MCF 10A (cell line): ENCODE measurements at regions of chr11 and their contacts with region 1.

Region 1: DNA sequence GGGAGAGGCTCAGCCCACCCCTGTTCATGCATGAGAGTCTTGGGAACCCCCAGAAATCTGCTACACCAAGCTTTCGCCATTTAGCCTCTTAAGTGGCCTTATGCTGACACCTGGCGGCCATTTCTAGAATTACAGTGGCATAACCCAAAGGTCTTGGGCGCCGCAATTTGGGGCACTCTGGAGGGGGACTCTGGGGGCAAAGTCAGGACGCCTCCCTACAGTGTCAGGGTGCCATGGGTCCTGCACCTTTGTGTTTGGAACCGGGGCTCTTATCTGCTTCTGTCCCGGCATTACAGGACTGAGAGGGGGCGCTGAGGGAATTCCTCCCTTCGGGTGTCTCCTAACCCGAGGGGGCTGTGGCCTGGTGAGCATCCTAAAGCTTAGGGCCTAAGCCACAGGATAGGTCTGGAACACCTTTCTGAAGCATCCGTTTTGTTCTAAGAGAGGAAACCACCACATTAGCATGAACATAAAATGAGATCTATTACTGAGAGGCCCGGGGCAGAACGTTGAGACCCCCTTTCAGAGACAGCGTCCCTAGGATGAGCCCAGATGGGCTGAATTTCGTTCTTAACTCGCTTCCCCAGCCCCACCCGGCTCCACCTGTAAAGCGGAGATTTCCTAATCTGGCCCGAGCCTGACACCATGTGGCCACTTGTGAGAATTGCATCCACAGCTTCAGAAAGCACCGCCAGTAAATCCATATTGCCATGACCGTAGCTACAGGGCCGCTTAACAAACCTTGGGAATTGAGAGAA is 9.3 kb downstream of the INS start:
- DNase-seq: peak; percentile 78
- H3K4me3 Mint-ChIP-seq: no peak overlapping the region
- H3K27ac Mint-ChIP-seq: no peak overlapping the region
- H3K4me1 Mint-ChIP-seq: no peaks in the 10 kb centered on the region
- H3K27me3 Mint-ChIP-seq: peaks cover 43% of the 10 kb centered on the region
- CTCF ChIP-seq: peak; percentile 79

Region 2: DNA sequence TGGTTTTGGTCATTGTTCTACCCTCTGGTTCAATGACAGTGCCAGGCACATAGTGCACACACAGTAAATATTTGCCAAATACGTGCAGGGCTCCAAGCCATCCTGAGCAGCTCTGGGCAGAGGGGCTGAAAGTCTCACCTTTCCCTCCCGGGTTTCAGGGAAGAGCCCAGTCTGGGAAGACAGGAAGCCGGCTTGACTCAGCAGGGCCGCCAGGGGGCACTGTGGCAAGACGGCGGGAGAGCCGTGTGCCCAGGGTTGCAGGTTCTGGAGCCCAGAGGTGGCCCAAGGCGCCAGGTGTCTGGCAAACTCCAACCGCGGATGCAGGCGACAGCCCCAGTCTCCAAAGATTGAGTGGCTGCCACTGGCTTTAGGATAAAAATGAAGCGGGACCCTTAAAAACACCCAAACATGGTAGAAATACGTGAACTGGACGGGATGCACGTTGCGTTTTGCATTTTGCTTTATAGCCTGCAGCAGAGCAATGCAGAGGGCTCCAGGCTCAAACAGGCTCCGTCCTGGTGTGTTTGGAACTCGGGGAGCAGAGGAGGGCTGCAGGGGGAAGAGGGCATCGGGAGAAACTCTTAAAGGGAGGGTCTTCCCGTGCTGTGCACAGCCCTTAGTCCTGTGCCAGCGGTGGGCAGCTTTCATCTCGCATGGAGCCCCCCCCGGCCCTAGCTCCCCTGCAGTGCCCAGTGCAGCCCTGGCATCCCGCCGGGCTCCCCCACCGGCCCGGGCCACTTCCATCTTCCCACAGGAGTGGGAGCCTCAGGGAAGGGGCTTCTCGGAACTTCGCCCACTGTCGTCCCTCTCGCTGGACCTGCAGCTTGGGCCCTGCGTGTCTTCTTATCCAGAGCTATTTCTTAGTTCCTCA is 511.4 kb before region 1 on chr11:
- CTCF ChIA-PET with region 1: interaction called, 14 read pairs
- POLR2A ChIA-PET with region 1: no interaction called
- intact Hi-C with region 1: no loop called
- DNase-seq: peak; percentile 49
- H3K4me3 Mint-ChIP-seq: no peak overlapping the region
- H3K27ac Mint-ChIP-seq: no peak overlapping the region
- H3K4me1 Mint-ChIP-seq: no peaks in the 10 kb centered on the region
- H3K27me3 Mint-ChIP-seq: peaks cover 61% of the 10 kb centered on the region
- CTCF ChIP-seq: peak; percentile 92

Region 3: DNA sequence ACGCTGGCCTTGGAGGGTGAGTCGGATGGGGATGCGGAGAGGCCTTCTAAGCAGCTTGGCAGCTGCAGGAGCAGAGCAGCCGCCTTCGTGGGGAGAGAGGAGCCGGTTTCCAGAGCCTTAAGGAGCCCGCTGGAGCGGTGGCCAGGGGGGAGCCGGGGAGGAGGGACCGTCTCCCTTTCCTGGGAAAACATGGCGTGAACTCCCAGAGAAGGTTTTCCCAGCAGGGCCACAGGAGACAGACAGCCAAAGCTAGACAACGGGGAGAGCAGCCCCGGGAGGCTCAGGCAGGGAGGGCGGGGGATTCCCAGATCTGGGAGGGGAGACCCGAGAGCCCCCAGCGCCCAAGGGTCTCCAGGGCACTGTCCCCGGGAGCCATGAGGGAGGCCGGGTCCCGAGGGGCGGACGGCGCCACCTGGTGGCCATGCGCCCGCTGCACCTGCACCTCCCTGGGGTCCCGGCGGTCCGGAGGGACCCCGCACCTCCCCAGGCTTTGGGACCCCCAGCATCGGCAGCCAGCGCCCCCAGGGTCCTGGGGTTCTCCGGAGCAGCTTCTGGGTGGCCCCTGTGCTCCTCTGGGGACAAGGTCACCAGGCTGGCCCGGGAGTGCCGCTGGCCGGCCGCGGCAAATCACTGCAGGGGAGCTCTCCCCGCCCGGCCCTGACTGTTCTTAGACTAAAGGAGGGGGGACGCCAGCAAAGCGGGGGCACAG is 319.3 kb before region 1 on chr11:
- CTCF ChIA-PET with region 1: interaction called, 14 read pairs
- POLR2A ChIA-PET with region 1: no interaction called
- intact Hi-C with region 1: loop called (anchors 2 kb)
- DNase-seq: no peak
- H3K4me3 Mint-ChIP-seq: no peak overlapping the region
- H3K27ac Mint-ChIP-seq: no peak overlapping the region
- H3K4me1 Mint-ChIP-seq: peaks cover 56% of the 10 kb centered on the region
- H3K27me3 Mint-ChIP-seq: no peaks in the 10 kb centered on the region
- CTCF ChIP-seq: peak; percentile 97

Region 4: GRCh38 chr11:1882519-1883238 is 269.0 kb before region 1 on chr11:
- CTCF ChIA-PET with region 1: interaction called, 43 read pairs
- POLR2A ChIA-PET with region 1: no interaction called
- intact Hi-C with region 1: loop called (anchors 1 kb)
- DNase-seq: peak; percentile 79
- H3K4me3 Mint-ChIP-seq: no peak overlapping the region
- H3K27ac Mint-ChIP-seq: no peak overlapping the region
- H3K4me1 Mint-ChIP-seq: peaks cover 2% of the 10 kb centered on the region
- H3K27me3 Mint-ChIP-seq: no peaks in the 10 kb centered on the region
- CTCF ChIP-seq: peak; percentile 85

Region 5: GRCh38 chr11:1983601-1983961 is 168.1 kb before region 1 on chr11:
- CTCF ChIA-PET with region 1: interaction called, 10 read pairs
- POLR2A ChIA-PET with region 1: no interaction called
- intact Hi-C with region 1: no loop called
- DNase-seq: no peak
- H3K4me3 Mint-ChIP-seq: no peak overlapping the region
- H3K27ac Mint-ChIP-seq: no peak overlapping the region
- H3K4me1 Mint-ChIP-seq: no peaks in the 10 kb centered on the region
- H3K27me3 Mint-ChIP-seq: no peaks in the 10 kb centered on the region
- CTCF ChIP-seq: no peak

Region 6: GRCh38 chr11:2036863-2037486 is 114.7 kb before region 1 on chr11:
- CTCF ChIA-PET with region 1: interaction called, 541 read pairs
- POLR2A ChIA-PET with region 1: interaction called, 8 read pairs
- intact Hi-C with region 1: no loop called
- DNase-seq: no peak
- H3K4me3 Mint-ChIP-seq: no peak overlapping the region
- H3K27ac Mint-ChIP-seq: no peak overlapping the region
- H3K4me1 Mint-ChIP-seq: no peaks in the 10 kb centered on the region
- H3K27me3 Mint-ChIP-seq: no peaks in the 10 kb centered on the region
- CTCF ChIP-seq: no peak